ENCODE measurements at regions of chr10 and their contacts with region 1.

Region 1: GRCh38 chr10:97608991-97609561 is 19.6 kb downstream of the C10orf62 start:
- DNase-seq: no peak

Region 2: GRCh38 chr10:97572214-97572989 is 36.7 kb before region 1 on chr10 and contains the start of gene ANKRD2:
- intact Hi-C with region 1: loop called (anchors 5 kb)
- DNase-seq: peak; percentile 67 to 93 (median 86)